MCF 10A (cell line): ENCODE measurements at regions of chr1 and their contacts with region 1.

Region 1: GRCh38 chr1:79497193-79497773 is 490.8 kb upstream of the ADGRL4 start:
- DNase-seq: peak; percentile 53
- H3K4me3 Mint-ChIP-seq: no peak overlapping the region
- H3K27ac Mint-ChIP-seq: no peak overlapping the region
- H3K4me1 Mint-ChIP-seq: no peaks in the 10 kb centered on the region
- H3K27me3 Mint-ChIP-seq: no peaks in the 10 kb centered on the region
- CTCF ChIP-seq: peak; percentile 89

Region 2: GRCh38 chr1:79617777-79618176 is 120.5 kb after region 1 on chr1:
- CTCF ChIA-PET with region 1: no interaction called
- POLR2A ChIA-PET with region 1: no interaction called
- intact Hi-C with region 1: no loop called
- DNase-seq: no peak
- H3K4me3 Mint-ChIP-seq: no peak overlapping the region
- H3K27ac Mint-ChIP-seq: no peak overlapping the region
- H3K4me1 Mint-ChIP-seq: peaks cover 6% of the 10 kb centered on the region
- H3K27me3 Mint-ChIP-seq: no peaks in the 10 kb centered on the region
- CTCF ChIP-seq: peak; percentile 25

Region 3: GRCh38 chr1:79899914-79900313 is 402.6 kb after region 1 on chr1:
- CTCF ChIA-PET with region 1: no interaction called
- POLR2A ChIA-PET with region 1: no interaction called
- intact Hi-C with region 1: loop called (anchors 10 kb)
- DNase-seq: peak; percentile 37
- H3K4me3 Mint-ChIP-seq: no peak overlapping the region
- H3K27ac Mint-ChIP-seq: peak overlapping the region; percentile 16
- H3K4me1 Mint-ChIP-seq: peaks cover 8% of the 10 kb centered on the region
- H3K27me3 Mint-ChIP-seq: no peaks in the 10 kb centered on the region
- CTCF ChIP-seq: no peak